MCF 10A (cell line): ENCODE measurements at regions of chr9 and their contacts with region 1.

Region 1: GRCh38 chr9:77793904-77794303 is 145.8 kb upstream of the GNA14 start:
- DNase-seq: peak; percentile 70
- H3K4me3 Mint-ChIP-seq: peak overlapping the region; percentile 24
- H3K27ac Mint-ChIP-seq: peak overlapping the region; percentile 86
- H3K4me1 Mint-ChIP-seq: peaks cover 18% of the 10 kb centered on the region
- H3K27me3 Mint-ChIP-seq: no peaks in the 10 kb centered on the region
- CTCF ChIP-seq: peak; percentile 28

Region 2: DNA sequence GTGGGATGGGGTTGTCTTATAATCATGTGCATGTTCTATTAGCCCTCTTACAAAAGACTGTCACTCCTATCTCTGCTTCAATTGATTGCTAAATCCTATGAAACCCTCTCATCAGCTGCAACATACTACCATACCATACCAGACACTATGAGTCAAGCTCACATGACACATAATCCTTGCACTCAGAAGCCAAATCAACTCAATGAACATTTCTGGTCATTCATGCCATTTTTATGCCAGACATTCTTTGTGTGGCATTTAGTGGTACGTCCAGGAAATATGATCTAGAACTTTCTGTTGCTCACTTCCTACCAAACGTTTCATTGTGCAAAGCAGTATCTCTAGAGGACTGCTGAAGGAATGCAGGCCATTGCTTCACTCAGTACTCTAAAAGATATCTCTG is 13.4 kb after region 1 on chr9:
- CTCF ChIA-PET with region 1: interaction called, 4 read pairs
- POLR2A ChIA-PET with region 1: interaction called, 5 read pairs
- intact Hi-C with region 1: loop called (anchors 1 kb)
- DNase-seq: peak; percentile 92
- H3K4me3 Mint-ChIP-seq: peak overlapping the region; percentile 5
- H3K27ac Mint-ChIP-seq: peak overlapping the region; percentile 19
- H3K4me1 Mint-ChIP-seq: peaks cover 36% of the 10 kb centered on the region
- H3K27me3 Mint-ChIP-seq: no peaks in the 10 kb centered on the region
- CTCF ChIP-seq: no peak